Left colon (tissue), 2 donors: ENCODE measurements at regions of chr1 and their contacts with region 1.

Region 1: DNA sequence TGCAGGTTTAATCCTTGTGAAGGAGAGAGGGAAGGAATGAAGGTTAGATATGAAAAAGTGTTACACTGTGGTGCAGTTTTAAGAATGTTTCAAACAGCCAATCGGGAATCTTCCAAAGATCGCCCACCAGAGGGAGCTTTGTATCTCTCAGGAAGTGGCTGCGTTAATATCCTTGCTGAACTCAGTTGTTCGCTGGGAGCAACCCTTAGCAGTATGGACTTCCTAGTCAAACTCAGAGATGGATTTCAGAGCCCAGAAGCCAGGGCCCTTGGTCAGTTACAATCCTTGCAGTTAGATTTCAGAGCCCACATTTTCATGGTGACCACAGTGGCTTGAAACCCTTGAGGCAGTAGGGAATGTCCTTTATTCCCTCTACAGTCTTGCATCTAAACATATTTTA is 136.2 kb downstream of the NTNG1 start:
- DNase-seq: peak; percentile 25 to 44
- ATAC-seq: peak; percentile 70

Region 2: DNA sequence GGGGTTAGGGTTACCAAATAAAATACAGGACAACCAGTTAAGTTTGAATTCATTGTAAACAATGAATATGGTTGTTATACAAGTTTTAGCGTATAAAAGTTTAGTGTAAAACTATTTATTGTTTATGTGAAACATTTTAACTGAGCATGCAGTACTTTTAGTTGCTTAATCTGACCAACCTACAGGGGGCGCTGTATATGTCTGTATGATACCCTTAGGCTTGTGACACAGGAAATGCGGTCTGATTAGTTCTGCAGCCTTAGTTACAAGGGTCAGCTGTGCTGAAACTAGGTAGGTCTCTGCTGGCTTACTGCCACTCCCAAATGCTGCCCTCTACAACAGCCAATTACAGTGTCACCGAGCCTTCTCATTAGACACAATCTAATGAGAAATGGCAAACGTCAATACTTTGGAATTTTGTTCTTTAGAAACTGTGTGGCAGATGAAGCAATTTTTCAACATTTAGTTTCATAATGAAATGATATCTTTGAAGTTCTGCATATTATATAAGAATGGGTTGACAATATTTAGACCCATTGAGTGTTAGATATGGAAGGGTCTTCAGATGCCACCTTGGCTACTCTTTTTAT is 80.0 kb before region 1 on chr1:
- intact Hi-C with region 1: no loop called
- DNase-seq: peak in 1 of 2 donors; percentile 7
- ATAC-seq: no peak

Region 3: DNA sequence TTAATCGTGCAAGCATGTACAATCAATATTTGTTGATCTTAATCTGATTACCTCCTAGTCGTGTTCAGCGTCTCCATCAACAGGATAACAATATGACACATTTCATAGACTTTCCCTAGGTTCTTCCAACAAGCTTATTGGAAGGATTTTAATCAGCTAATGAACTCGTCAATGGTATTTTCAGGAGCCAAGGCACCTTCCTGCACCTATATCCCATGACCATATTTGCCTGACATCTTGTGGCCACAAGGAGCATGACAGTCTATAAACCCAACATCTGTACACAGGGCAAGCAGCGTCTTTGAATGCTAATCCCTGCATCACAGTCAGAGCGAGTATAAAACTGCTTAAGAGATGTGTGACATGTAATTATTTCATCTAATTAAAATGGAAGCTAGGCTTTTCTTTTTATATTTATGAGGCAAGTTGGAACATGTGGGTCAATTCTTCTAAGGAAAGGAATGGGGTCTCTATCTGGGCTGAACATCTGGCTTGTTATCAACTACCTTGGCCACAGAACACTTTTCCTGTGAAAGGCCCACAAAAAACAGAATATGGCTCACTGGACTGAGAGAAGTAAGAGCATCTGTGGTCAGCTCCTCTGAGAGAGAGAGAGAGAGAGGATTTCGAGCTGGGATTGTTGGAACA is 252.6 kb after region 1 on chr1:
- intact Hi-C with region 1: loop called in 1 of 2 experiments (anchors 5 kb)
- DNase-seq: peak in 1 of 2 donors; percentile 10
- ATAC-seq: peak; percentile 91